ENCODE measurements at regions of chr2 and their contacts with region 1.

Region 1: GRCh38 chr2:64730551-64731262 is 77.0 kb upstream of the SERTAD2 start:
- DNase-seq: peak; percentile 94
- ATAC-seq: peak; percentile 91
- H3K4me3 ChIP-seq: peak overlapping the region; percentile 10 to 59 (median 46)
- H3K27ac ChIP-seq: peak overlapping the region; percentile 83
- H3K4me1 ChIP-seq: peaks cover 76% of the 10 kb centered on the region
- H3K27me3 ChIP-seq: no peaks in the 10 kb centered on the region
- CTCF ChIP-seq: no peak
- EP300 ChIP-seq: peak; percentile 81 to 89; a peak in 3 of 4 replicates
- POLR2A ChIP-seq: peak in 1 of 2 experiments; percentile 64; a peak in 2 of 4 replicates
- RAD21 ChIP-seq: no peak

Region 2: DNA sequence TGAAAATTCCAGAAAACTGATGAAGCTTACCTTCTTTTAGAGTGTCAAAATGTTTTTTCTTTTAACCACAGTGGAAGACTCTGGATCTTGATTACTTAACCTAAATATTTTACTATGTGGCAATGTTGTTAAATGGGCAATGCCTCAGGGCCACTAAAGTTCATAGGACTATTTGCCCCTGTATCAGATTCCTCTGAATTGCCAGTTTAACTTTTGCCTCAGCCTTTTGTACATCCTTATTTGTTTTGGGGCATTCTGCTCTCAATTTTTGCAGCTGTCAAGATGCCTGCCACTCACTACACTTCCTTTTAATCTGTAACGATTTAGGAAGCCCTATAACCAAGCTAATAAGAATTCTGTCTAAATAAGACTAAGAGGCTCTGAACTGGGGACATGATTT is 45.3 kb before region 1 on chr2:
- CTCF ChIA-PET with region 1: no interaction called
- POLR2A ChIA-PET with region 1: no interaction called
- in situ Hi-C with region 1: no loop called
- intact Hi-C with region 1: loop called (anchors 5 kb)
- DNase-seq: peak; percentile 88
- ATAC-seq: peak; percentile 93
- H3K4me3 ChIP-seq: no peak overlapping the region; a peak in 1 of 6 replicates
- H3K27ac ChIP-seq: peak overlapping the region; percentile 28
- H3K4me1 ChIP-seq: peaks cover 48% of the 10 kb centered on the region
- H3K27me3 ChIP-seq: no peaks in the 10 kb centered on the region
- CTCF ChIP-seq: no peak
- EP300 ChIP-seq: peak in 1 of 2 experiments; percentile 88; a peak in 2 of 4 replicates
- POLR2A ChIP-seq: no peak
- RAD21 ChIP-seq: no peak

Region 3: DNA sequence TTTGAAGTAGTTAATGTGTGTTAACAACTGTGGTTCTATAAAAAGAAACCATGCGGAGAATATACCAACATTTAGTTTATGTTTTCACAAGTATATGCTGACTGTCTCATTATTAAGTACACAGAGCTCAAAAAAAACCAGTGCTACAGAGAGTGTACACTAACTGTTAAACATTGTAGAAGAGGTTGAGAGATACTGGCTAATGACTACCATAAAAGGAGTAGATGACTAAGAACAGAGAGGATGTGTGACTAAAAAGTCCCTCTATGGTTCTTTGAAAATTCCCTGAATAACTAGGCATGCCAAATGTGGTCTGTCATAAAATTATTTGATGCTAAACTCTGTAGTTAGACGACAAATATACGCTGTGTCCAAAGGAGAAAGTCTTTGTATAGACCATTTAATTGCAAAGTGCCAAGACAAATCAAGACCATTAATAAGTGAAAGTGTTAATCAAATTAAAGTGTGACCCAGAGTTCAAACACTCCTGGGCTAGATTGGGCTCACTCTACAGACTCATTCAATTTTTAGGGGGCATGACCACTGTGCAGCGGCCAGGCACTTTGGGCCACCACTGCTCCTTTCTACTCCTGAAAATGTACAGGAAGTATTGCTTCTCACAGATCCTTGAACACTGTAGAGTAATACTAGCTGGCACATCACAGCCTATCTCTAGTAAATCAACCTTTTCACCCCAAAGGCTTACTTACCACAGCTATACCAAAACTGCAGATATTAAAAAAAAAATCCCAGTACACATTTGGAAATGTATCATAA is 31.9 kb before region 1 on chr2:
- CTCF ChIA-PET with region 1: no interaction called
- POLR2A ChIA-PET with region 1: no interaction called
- in situ Hi-C with region 1: no loop called
- intact Hi-C with region 1: loop called (anchors 2 kb)
- DNase-seq: peak; percentile 72
- ATAC-seq: peak; percentile 86
- H3K4me3 ChIP-seq: no peak overlapping the region
- H3K27ac ChIP-seq: peak overlapping the region; percentile 3
- H3K4me1 ChIP-seq: peaks cover 20% of the 10 kb centered on the region
- H3K27me3 ChIP-seq: no peaks in the 10 kb centered on the region
- CTCF ChIP-seq: no peak
- EP300 ChIP-seq: peak in 1 of 2 experiments; percentile 10; a peak in 1 of 4 replicates
- POLR2A ChIP-seq: no peak
- RAD21 ChIP-seq: no peak

Region 4: GRCh38 chr2:64742678-64743077 is 12.0 kb after region 1 on chr2:
- CTCF ChIA-PET with region 1: no interaction called
- POLR2A ChIA-PET with region 1: interaction called, 15 read pairs
- in situ Hi-C with region 1: no loop called
- intact Hi-C with region 1: no loop called
- DNase-seq: no peak
- ATAC-seq: no peak
- H3K4me3 ChIP-seq: no peak overlapping the region
- H3K27ac ChIP-seq: no peak overlapping the region
- H3K4me1 ChIP-seq: peaks cover 14% of the 10 kb centered on the region
- H3K27me3 ChIP-seq: no peaks in the 10 kb centered on the region
- CTCF ChIP-seq: no peak
- EP300 ChIP-seq: no peak
- POLR2A ChIP-seq: no peak
- RAD21 ChIP-seq: no peak

Region 5: DNA sequence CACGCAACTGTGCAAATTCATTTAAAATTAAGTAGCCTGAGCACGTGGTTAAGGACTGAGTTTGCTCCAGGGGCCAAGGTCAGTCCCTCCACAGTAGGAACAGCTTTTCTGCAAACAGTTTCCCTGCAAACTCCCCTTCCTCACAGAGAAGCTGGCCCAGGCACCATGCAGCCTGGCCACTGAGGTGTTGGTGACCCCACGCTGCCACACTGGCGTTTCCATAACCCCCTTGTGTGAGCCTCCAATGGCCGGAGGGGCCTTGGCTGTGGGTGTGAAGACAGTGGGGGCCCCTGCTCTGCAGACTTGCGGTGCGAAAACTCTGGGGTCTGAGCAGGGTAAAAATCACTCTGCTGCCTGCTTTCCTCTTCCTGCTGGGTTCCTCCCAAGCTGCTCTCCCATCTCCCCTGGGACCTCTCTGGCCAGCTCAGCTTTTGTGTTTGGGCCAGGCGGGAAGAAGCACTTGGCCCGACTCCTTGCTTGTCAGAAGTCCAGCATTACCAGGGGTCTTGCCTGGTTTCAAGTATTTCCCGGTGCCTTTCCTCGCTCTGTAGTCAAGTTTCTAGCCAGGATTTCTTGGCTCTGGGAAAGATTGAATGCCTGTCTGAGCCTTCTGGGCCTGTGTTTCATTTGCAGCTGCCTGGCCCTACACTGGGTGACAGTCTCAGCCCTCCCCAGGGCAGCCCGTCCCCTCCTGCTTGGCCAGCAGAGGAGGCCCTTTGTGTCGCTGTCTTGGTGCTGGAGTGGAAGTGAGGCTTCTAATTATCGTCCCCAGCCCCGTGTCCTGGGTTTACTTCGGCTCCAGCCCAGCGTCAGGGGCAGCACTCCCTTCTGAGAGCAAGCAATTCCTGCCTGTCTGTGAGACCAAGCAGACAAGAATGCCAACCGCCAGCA is 127.1 kb after region 1 on chr2:
- CTCF ChIA-PET with region 1: no interaction called
- POLR2A ChIA-PET with region 1: no interaction called
- in situ Hi-C with region 1: no loop called
- intact Hi-C with region 1: no loop called
- DNase-seq: no peak
- ATAC-seq: peak; percentile 73
- H3K4me3 ChIP-seq: peak overlapping the region; percentile 11 to 76 (median 57)
- H3K27ac ChIP-seq: no peak overlapping the region
- H3K4me1 ChIP-seq: peaks cover 58% of the 10 kb centered on the region
- H3K27me3 ChIP-seq: peaks cover 2 to 46% of the 10 kb centered on the region in 2 experiments; a peak in 3 of 5 replicates
- CTCF ChIP-seq: no peak; the same call in 1 of the 2 replicates
- EP300 ChIP-seq: no peak
- POLR2A ChIP-seq: no peak
- RAD21 ChIP-seq: no peak